ENCODE measurements at regions of chr3 and their contacts with region 1.

Region 1: GRCh38 chr3:119643528-119643927 is 16.9 kb downstream of the POPDC2 start:
- DNase-seq: peak; percentile 72
- H3K4me3 ChIP-seq: no peak overlapping the region
- H3K27me3 ChIP-seq: no peaks in the 10 kb centered on the region
- CTCF ChIP-seq: no peak

Region 2: GRCh38 chr3:118850687-118851086 is 792.8 kb before region 1 on chr3:
- CTCF ChIA-PET with region 1: no interaction called
- POLR2A ChIA-PET with region 1: no interaction called
- DNase-seq: no peak
- H3K4me3 ChIP-seq: no peak overlapping the region
- H3K27me3 ChIP-seq: no peaks in the 10 kb centered on the region
- CTCF ChIP-seq: no peak

Region 3: GRCh38 chr3:119289404-119289770 is 354.1 kb before region 1 on chr3:
- CTCF ChIA-PET with region 1: no interaction called
- POLR2A ChIA-PET with region 1: no interaction called
- DNase-seq: no peak
- H3K4me3 ChIP-seq: no peak overlapping the region
- H3K27me3 ChIP-seq: no peaks in the 10 kb centered on the region; the same call in 1 of the 2 replicates
- CTCF ChIP-seq: no peak

Region 4: DNA sequence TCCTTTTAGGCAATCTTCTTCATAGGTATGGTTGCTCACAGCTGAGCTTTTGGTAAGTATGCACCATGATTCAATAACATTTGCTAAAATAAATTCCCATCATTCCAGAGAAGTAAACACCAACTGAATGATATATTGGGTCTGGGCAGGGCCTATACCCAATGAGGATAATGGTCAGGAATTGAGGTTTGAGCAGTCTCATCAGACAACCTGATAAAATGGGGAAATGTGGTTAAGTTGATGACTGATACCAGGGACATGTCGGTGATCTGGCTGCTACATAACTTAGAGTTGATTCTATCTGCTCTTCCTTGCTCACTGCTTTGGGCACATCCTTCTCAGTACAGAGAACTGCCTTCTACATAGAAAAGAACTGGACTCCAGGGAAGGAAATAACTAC is 548.6 kb after region 1 on chr3:
- CTCF ChIA-PET with region 1: no interaction called
- POLR2A ChIA-PET with region 1: interaction called, 14 read pairs
- DNase-seq: no peak
- H3K4me3 ChIP-seq: no peak overlapping the region
- H3K27me3 ChIP-seq: no peaks in the 10 kb centered on the region
- CTCF ChIP-seq: no peak